ENCODE measurements at regions of chr7 and their contacts with region 1.

Region 1: DNA sequence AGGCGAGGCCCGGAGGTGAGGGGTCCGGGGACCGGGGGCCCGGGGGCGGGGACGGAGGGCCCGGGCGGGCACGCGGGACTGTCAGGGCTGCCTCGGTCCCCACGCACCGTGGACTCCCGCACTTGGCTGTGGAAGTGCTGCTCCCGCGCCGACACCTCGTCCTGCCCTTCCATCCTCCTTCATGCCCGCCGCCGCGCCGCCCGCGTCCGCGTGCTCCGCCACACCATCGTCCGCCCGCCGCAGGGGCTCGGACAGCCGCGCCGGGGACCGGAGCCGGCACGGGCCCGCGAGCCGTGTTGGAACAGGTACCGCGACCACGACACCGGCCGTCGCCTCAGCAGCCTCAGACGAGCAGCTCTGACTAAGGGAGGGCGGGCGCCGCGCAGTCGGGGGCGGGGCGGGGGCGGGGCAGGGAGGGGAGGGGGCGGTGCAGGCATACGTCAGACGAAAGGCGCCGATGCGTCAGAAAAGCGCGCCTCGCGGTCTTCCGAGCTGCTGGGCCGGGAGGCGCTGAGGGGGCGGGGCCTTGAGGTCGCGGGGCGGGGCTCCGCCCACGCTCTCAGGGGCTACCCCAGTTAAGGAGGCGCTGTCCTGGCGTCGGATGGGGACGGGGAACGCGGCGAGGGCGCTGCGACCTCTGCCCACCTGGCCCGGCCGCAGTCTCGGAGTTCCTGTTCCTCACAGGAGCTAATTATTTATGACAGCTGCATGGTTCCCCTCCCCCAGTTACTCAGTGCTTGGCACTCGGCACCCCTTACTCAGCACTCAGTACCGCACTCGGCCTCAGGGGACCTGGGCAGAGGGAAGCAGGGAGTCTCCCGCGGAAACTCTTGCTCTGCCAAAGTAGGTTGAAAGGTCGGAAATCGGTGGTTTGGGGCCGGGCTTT is at the start of gene LMBR1:
- DNase-seq: peak; percentile 93 to 96 (median 94)
- H3K4me3 ChIP-seq: peak within 1 kb of the TSS; percentile 67 to 80
- H3K4me3 Mint-ChIP-seq: peak within 1 kb of the TSS; percentile 90 to 96 (median 92)
- H3K27ac ChIP-seq: peak within 1 kb of the TSS; percentile 79
- H3K27ac Mint-ChIP-seq: peak within 1 kb of the TSS; percentile 92 to 97 (median 94)
- H3K4me1 ChIP-seq: peaks cover 31% of the 10 kb centered on the region
- H3K4me1 Mint-ChIP-seq: peaks cover 19 to 63% (median 37%) of the 10 kb centered on the region in 4 donors
- H3K27me3 ChIP-seq: no peaks in the 10 kb centered on the region
- H3K27me3 Mint-ChIP-seq: no peaks in the 10 kb centered on the region
- total RNA-seq, gene LMBR1: 73.9 to 97.4 TPM

Region 2: GRCh38 chr7:155003376-155004214 is 1889.5 kb before region 1 on chr7:
- CTCF ChIA-PET with region 1: no interaction called
- POLR2A ChIA-PET with region 1: no interaction called
- intact Hi-C with region 1: loop called (anchors 10 kb)
- DNase-seq: peak; percentile 80 to 92 (median 88)
- H3K4me3 ChIP-seq: peak overlapping the region; percentile 81 to 91
- H3K4me3 Mint-ChIP-seq: peak overlapping the region; percentile 93 to 97 (median 95)
- H3K27ac ChIP-seq: peak overlapping the region; percentile 84
- H3K27ac Mint-ChIP-seq: peak overlapping the region; percentile 38 to 96 (median 95)
- H3K4me1 ChIP-seq: peaks cover 19% of the 10 kb centered on the region
- H3K4me1 Mint-ChIP-seq: peaks cover 8 to 16% (median 12%) of the 10 kb centered on the region in 4 donors
- H3K27me3 ChIP-seq: no peaks in the 10 kb centered on the region
- H3K27me3 Mint-ChIP-seq: no peaks in the 10 kb centered on the region

Region 3: GRCh38 chr7:156640257-156640948 is 252.7 kb before region 1 on chr7 and contains the start of gene RNF32:
- CTCF ChIA-PET with region 1: interaction called, 3 read pairs
- POLR2A ChIA-PET with region 1: interaction called, 5 read pairs
- intact Hi-C with region 1: loop called (anchors 1 kb)
- DNase-seq: peak; percentile 87 to 94 (median 91)
- H3K4me3 ChIP-seq: peak within 1 kb of the TSS; percentile 44 to 78
- H3K4me3 Mint-ChIP-seq: peak within 1 kb of the TSS; percentile 81 to 94 (median 92)
- H3K27ac ChIP-seq: peak within 1 kb of the TSS; percentile 80
- H3K27ac Mint-ChIP-seq: peak within 1 kb of the TSS; percentile 87 to 98 (median 96)
- H3K4me1 ChIP-seq: peaks cover 14% of the 10 kb centered on the region
- H3K4me1 Mint-ChIP-seq: peaks cover 3 to 22% (median 12%) of the 10 kb centered on the region in 4 donors
- H3K27me3 ChIP-seq: no peaks in the 10 kb centered on the region
- H3K27me3 Mint-ChIP-seq: peaks cover 0 to 3% of the 10 kb centered on the region in 2 donors
- total RNA-seq, gene RNF32: 1.3 to 2.0 TPM

Region 4: DNA sequence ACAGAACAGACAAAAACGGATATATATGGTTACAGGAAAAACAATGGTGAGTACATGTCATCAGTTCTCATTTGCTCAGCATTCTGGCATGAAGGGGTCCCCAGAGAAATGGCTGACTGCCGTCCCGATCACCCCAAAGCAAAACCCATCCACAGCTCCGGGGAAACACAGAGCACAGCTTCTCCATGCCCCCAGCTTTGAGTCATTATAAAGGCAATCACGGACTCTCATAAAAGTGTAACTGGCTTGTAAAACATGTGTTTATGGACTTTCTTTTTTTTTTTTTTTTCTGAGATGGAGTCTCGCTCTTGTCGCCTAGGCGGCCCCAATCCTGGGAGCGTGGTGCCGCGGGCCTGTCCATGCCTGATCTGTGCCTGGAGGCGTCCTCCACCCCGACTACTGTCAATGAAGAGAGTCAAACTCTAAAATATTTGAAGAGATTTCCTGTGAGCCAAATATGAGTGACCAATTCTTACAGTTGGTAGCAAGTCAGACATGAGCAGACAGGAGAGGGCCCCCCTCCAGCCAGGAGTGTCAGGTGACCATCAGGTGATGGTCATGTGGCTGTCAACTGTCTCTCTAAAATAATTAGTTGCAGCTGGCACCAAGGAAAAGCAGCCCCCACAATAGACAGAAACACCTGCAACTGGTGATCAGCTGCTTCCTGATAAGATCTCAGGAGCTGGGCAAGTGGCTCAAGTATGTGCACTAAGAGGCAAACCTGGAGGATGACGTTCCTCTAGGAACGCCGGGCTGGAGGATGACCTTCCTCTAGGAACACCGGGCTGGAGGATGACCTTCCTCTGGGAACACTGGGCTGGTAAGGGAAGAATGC is 34.7 kb after region 1 on chr7:
- CTCF ChIA-PET with region 1: no interaction called
- POLR2A ChIA-PET with region 1: interaction called, 12 read pairs
- intact Hi-C with region 1: loop called (anchors 2 kb)
- DNase-seq: no peak
- H3K4me3 ChIP-seq: no peak overlapping the region
- H3K4me3 Mint-ChIP-seq: no peak overlapping the region
- H3K27ac ChIP-seq: no peak overlapping the region
- H3K27ac Mint-ChIP-seq: peak overlapping the region in 5 of 7 donors; percentile 25 to 88 (median 36)
- H3K4me1 ChIP-seq: peaks cover 19% of the 10 kb centered on the region
- H3K4me1 Mint-ChIP-seq: peaks cover 14 to 43% (median 32%) of the 10 kb centered on the region in 4 donors
- H3K27me3 ChIP-seq: no peaks in the 10 kb centered on the region
- H3K27me3 Mint-ChIP-seq: peaks cover 0 to 4% of the 10 kb centered on the region in 2 donors

Region 5: DNA sequence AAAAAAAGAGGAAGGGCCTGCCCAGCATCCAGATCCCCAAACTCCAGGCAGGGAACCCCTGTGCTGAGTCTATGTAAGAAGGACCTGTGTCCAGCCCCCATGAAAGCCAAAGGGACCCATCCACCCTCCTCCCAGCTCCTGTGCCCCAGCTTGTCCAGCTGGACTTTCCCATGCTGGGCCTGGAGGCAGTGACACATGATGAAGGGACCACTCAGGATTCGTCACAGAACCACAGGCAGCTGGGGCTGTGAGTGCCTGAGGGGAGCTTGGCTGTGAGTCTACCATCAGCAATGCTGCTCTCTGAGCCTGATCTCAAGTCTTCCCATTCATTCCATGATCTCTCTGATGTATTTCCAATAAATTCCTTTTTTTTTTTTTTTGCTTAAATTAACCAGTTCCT is 153.6 kb after region 1 on chr7:
- CTCF ChIA-PET with region 1: no interaction called
- POLR2A ChIA-PET with region 1: no interaction called
- intact Hi-C with region 1: no loop called
- DNase-seq: no peak
- H3K4me3 ChIP-seq: no peak overlapping the region
- H3K4me3 Mint-ChIP-seq: no peak overlapping the region
- H3K27ac ChIP-seq: no peak overlapping the region
- H3K27ac Mint-ChIP-seq: no peak overlapping the region
- H3K4me1 ChIP-seq: no peaks in the 10 kb centered on the region
- H3K4me1 Mint-ChIP-seq: no peaks in the 10 kb centered on the region
- H3K27me3 ChIP-seq: no peaks in the 10 kb centered on the region
- H3K27me3 Mint-ChIP-seq: peaks cover 9% of the 10 kb centered on the region in 2 donors

Region 6: GRCh38 chr7:157138424-157139110 is 245.5 kb after region 1 on chr7 and contains the start of gene UBE3C:
- CTCF ChIA-PET with region 1: no interaction called
- POLR2A ChIA-PET with region 1: interaction called, 3 read pairs
- intact Hi-C with region 1: loop called (anchors 1 kb)
- DNase-seq: peak; percentile 88 to 94 (median 94)
- H3K4me3 ChIP-seq: peak within 1 kb of the TSS; percentile 62 to 70
- H3K4me3 Mint-ChIP-seq: peak within 1 kb of the TSS; percentile 77 to 96 (median 88)
- H3K27ac ChIP-seq: peak within 1 kb of the TSS; percentile 79
- H3K27ac Mint-ChIP-seq: peak within 1 kb of the TSS; percentile 87 to 96 (median 92)
- H3K4me1 ChIP-seq: peaks cover 48% of the 10 kb centered on the region
- H3K4me1 Mint-ChIP-seq: peaks cover 29 to 53% (median 39%) of the 10 kb centered on the region in 4 donors
- H3K27me3 ChIP-seq: no peaks in the 10 kb centered on the region
- H3K27me3 Mint-ChIP-seq: no peaks in the 10 kb centered on the region
- total RNA-seq, gene UBE3C: 57.5 to 59.7 TPM